ENCODE measurements at regions of chr2 and their contacts with region 1.

Region 1: DNA sequence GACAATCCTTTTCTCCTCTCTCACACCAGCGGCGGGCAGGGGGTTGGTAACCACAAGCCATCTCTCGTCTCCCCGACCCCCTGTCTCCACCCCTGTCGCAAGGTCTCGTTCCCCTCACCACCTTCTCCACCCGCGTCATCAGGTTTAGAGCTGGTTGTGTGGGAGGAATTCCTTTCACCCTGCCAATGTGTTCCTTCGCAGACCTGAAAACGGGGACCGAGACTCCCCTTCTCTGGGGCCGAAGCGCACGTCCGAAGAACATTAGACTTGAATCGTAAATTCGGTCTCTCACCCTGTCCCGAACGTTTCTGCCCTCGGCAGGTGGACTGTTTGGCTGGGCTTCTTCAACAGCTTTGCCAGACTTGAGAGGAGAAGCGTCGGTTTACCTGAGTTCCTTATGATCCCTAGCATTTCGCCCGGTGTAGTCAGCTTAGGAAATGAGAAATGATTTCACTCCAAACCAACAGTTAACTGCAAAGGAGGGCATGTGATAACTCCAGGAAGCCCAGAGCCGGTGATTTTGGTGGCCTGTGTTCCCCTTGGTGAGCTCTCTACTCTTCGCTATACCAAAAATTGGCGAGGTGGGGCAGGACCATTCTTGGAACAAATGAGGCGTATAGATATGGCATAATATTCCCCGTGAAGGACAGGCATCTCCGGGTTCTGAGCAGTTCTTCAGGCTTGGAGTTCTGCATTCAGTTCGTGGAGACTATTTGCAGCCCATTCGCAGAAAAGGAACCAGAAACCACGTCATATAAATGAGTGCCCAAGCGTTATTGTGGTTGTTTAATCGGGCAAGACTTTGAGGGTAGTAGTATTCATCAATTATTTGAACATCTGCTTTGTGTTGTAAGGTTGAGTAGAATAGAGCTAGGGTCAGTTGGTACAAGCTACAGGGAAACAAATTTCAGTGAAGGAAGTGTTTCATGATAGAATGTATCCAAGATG is 694 bp downstream of the CFAP36 start:
- DNase-seq: peak; percentile 52
- ATAC-seq: peak; percentile 25
- H3K4me3 Mint-ChIP-seq: peak overlapping the region; percentile 99
- H3K27ac Mint-ChIP-seq: peak overlapping the region; percentile 90
- H3K4me1 Mint-ChIP-seq: peaks cover 8% of the 10 kb centered on the region
- H3K27me3 Mint-ChIP-seq: no peaks in the 10 kb centered on the region

Region 2: GRCh38 chr2:54115284-54116137 is 1404.7 kb before region 1 on chr2 and contains the start of gene ACYP2:
- CTCF ChIA-PET with region 1: no interaction called
- POLR2A ChIA-PET with region 1: no interaction called
- intact Hi-C with region 1: loop called in 1 of 2 experiments (anchors 10 kb)
- DNase-seq: peak; percentile 95
- ATAC-seq: peak; percentile 90
- H3K4me3 Mint-ChIP-seq: peak within 1 kb of the TSS; percentile 85
- H3K27ac Mint-ChIP-seq: peak within 1 kb of the TSS; percentile 96
- H3K4me1 Mint-ChIP-seq: peaks cover 12% of the 10 kb centered on the region
- H3K27me3 Mint-ChIP-seq: peaks cover 2% of the 10 kb centered on the region
- total RNA-seq, gene ACYP2: 6.0 to 6.9 TPM

Region 3: GRCh38 chr2:55282110-55282917 is 237.9 kb before region 1 on chr2:
- CTCF ChIA-PET with region 1: no interaction called
- POLR2A ChIA-PET with region 1: interaction called, 4 read pairs
- intact Hi-C with region 1: loop called in 1 of 2 experiments (anchors 1 kb)
- DNase-seq: peak; percentile 91
- ATAC-seq: peak; percentile 99
- H3K4me3 Mint-ChIP-seq: peak overlapping the region; percentile 86
- H3K27ac Mint-ChIP-seq: peak overlapping the region; percentile 94
- H3K4me1 Mint-ChIP-seq: peaks cover 14% of the 10 kb centered on the region
- H3K27me3 Mint-ChIP-seq: no peaks in the 10 kb centered on the region

Region 4: GRCh38 chr2:55419679-55420438 is 100.4 kb before region 1 on chr2 and contains the start of gene CCDC88A:
- CTCF ChIA-PET with region 1: interaction called, 3 read pairs
- POLR2A ChIA-PET with region 1: no interaction called
- intact Hi-C with region 1: loop called (anchors 1 kb)
- DNase-seq: peak; percentile 92
- ATAC-seq: peak; percentile 88
- H3K4me3 Mint-ChIP-seq: peak within 1 kb of the TSS; percentile 77
- H3K27ac Mint-ChIP-seq: peak within 1 kb of the TSS; percentile 69
- H3K4me1 Mint-ChIP-seq: peaks cover 34% of the 10 kb centered on the region
- H3K27me3 Mint-ChIP-seq: peaks cover 13% of the 10 kb centered on the region
- total RNA-seq, gene CCDC88A: 10.1 to 11.3 TPM

Region 5: GRCh38 chr2:55489467-55490062 is 30.6 kb before region 1 on chr2:
- CTCF ChIA-PET with region 1: no interaction called
- POLR2A ChIA-PET with region 1: no interaction called
- intact Hi-C with region 1: no loop called
- DNase-seq: no peak
- ATAC-seq: no peak
- H3K4me3 Mint-ChIP-seq: no peak overlapping the region
- H3K27ac Mint-ChIP-seq: no peak overlapping the region
- H3K4me1 Mint-ChIP-seq: no peaks in the 10 kb centered on the region
- H3K27me3 Mint-ChIP-seq: peaks cover 5% of the 10 kb centered on the region

Region 6: GRCh38 chr2:55590810-55591440 is 70.7 kb after region 1 on chr2:
- CTCF ChIA-PET with region 1: no interaction called
- POLR2A ChIA-PET with region 1: no interaction called
- intact Hi-C with region 1: loop called in 1 of 2 experiments (anchors 5 kb)
- DNase-seq: no peak
- ATAC-seq: peak; percentile 99
- H3K4me3 Mint-ChIP-seq: no peak overlapping the region
- H3K27ac Mint-ChIP-seq: peak overlapping the region; percentile 67
- H3K4me1 Mint-ChIP-seq: peaks cover 38% of the 10 kb centered on the region
- H3K27me3 Mint-ChIP-seq: no peaks in the 10 kb centered on the region

Measured in activated CD4-positive, alpha-beta T cell treated with anti-CD3 and anti-CD28 coated beads for 36 hours (primary cell).